Breast epithelium (tissue), 4 donors: ENCODE measurements at regions of chr9 and their contacts with region 1.

Region 1: GRCh38 chr9:13865869-13866268 is 448.1 kb downstream of the NFIB start:
- DNase-seq: no peak
- H3K4me3 ChIP-seq: no peak overlapping the region
- H3K27ac ChIP-seq: no peak overlapping the region
- H3K4me1 ChIP-seq: no peaks in the 10 kb centered on the region
- H3K27me3 ChIP-seq: no peaks in the 10 kb centered on the region
- CTCF ChIP-seq: no peak
- POLR2A ChIP-seq: no peak

Region 2: DNA sequence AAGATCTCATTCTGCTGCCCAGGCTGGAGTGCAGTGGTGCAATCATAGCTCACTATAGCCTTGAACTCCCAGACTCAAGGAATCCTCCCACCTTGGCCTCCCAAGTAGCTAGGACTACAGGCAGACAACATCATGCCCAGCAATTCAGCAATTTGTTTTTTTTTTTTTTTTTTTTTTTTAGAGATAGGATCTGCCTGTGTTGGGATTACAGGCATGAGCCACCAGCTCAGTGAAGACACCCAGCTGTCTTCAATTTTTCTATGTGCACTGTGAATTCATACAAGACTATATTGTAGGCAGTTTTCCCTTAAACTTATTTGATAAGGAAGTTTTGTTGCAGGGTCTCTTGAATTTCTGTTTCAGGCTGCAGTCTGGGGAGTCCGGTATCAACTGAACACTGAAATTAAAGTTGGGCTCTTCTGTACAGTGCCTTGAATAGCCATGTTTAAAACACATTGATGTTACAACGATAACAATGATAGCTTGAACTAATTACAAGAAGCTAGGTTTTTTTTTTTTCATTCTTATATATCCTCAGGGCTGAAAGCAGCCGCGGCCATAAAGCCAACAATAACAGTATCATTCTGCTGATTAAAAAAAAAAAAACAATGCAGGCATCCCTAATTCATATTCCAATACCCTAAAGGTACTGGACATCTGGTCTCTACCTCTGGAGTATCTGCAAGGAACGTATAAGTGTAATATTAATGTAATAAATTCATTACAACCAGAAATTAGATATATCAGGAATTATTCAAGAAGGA is 649.9 kb before region 1 on chr9:
- intact Hi-C with region 1: no loop called
- DNase-seq: no peak
- H3K4me3 ChIP-seq: no peak overlapping the region
- H3K27ac ChIP-seq: no peak overlapping the region
- H3K4me1 ChIP-seq: no peaks in the 10 kb centered on the region
- H3K27me3 ChIP-seq: no peaks in the 10 kb centered on the region
- CTCF ChIP-seq: no peak
- POLR2A ChIP-seq: no peak

Region 3: DNA sequence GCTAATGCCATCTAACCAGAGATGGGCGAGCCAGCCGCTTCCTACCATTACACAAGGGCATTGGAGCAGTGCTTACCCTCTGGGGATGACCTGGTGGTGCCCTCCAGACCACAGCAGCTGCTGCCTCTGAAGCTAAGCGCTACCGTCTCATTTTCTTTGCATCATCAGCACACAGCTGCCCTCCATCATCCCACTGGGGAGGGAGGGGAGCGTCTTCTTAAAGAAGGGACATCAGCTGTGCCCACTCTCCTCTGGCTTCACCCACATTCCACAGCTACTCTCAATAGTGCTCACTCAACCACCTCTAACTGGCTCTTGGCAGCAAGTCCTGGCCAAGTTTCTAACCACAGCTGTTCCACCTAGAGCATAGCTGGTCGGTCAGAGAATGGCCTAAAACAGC is 55.4 kb before region 1 on chr9:
- intact Hi-C with region 1: no loop called
- DNase-seq: peak in 1 of 2 donors; percentile 25
- H3K4me3 ChIP-seq: no peak overlapping the region
- H3K27ac ChIP-seq: no peak overlapping the region
- H3K4me1 ChIP-seq: no peaks in the 10 kb centered on the region
- H3K27me3 ChIP-seq: no peaks in the 10 kb centered on the region
- CTCF ChIP-seq: no peak
- POLR2A ChIP-seq: no peak

Region 4: DNA sequence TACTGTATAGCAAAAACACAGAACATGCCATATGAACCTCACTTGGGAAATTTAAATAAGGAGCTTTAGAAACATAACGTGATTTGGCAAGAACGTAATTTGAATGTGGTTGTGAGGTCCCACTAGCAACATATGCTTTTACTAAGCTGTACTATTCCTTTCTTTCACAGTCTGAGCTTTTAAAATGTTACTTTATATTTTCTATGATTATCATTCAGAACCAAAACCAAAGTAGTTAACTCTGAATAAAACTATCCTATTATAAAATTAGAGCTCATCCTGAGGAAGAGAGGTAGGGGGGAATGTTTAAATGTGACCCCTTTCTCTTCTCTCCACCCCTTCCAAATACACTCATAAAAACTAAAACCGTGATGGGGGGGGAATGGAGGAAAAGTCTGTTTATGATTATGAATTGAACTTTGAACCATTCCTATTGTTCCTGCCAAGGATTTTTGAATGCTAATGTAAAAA is 12.4 kb after region 1 on chr9:
- intact Hi-C with region 1: loop called (anchors 1 kb)
- DNase-seq: no peak
- H3K4me3 ChIP-seq: no peak overlapping the region
- H3K27ac ChIP-seq: no peak overlapping the region
- H3K4me1 ChIP-seq: no peaks in the 10 kb centered on the region
- H3K27me3 ChIP-seq: no peaks in the 10 kb centered on the region
- CTCF ChIP-seq: no peak
- POLR2A ChIP-seq: no peak